Mammary epithelial cell (primary cell): ENCODE measurements at regions of chrX and their contacts with region 1.

Region 1: GRCh38 chrX:132631579-132632232 is 142.9 kb upstream of the MBNL3 start:
- DNase-seq: peak; percentile 14
- H3K4me3 ChIP-seq: no peak overlapping the region
- H3K27ac ChIP-seq: no peak overlapping the region
- H3K4me1 ChIP-seq: no peaks in the 10 kb centered on the region
- H3K27me3 ChIP-seq: no peaks in the 10 kb centered on the region
- CTCF ChIP-seq: peak; percentile 57 to 69

Region 2: DNA sequence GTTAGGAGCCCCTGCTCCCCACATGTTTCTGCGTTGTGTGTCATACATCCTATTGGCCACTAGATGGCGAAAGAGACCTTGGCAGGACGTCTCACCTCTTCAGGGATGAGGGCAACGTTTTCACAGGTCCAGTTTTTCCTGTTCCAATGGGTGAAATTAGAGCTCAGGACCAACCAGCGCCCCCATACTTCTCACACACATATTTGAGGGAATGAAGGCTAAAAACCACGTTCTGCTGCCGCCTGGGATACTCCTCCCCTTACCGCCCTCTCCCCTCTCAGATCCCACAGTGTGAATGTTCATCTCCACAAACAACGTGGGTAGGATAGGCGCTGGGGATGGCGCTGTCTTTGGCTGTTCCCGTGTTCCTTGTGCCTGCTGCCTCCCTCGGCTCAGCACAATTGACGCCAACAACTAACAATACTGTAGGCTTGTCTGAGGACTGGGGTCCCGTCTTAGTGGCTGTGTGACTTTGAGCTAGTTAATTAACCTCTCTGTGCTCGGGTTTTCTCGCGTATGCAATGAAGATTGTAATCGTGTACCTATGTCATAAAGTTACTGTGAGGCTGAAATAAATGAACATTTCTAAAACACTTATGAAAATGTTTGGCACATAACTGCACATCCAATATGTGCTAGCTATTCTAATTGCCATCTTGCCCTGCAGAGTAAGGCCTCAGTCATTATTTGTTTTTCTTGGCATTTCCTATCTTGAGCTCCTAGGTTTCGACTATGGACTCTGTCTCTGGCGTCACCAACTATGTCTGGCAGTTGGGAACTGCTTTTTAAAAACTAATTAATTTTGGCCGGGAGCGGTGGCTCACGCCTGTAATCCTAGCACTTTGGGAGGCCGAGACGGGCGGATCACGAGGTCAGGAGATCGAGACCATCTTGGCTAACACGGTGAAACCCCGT is 790.0 kb before region 1 on chrX:
- CTCF ChIA-PET with region 1: no interaction called
- dilution Hi-C with region 1: no loop called
- in situ Hi-C with region 1: loop called in 1 of 2 experiments (anchors 25 kb)
- intact Hi-C with region 1: loop called (anchors 1 kb)
- DNase-seq: peak; percentile 54
- H3K4me3 ChIP-seq: no peak overlapping the region
- H3K27ac ChIP-seq: no peak overlapping the region
- H3K4me1 ChIP-seq: no peaks in the 10 kb centered on the region
- H3K27me3 ChIP-seq: no peaks in the 10 kb centered on the region
- CTCF ChIP-seq: peak; percentile 87 to 92

Region 3: GRCh38 chrX:132226169-132226568 is 405.5 kb before region 1 on chrX:
- CTCF ChIA-PET with region 1: no interaction called
- dilution Hi-C with region 1: no loop called
- in situ Hi-C with region 1: no loop called
- intact Hi-C with region 1: loop called (anchors 1 kb)
- DNase-seq: no peak
- H3K4me3 ChIP-seq: no peak overlapping the region
- H3K27ac ChIP-seq: no peak overlapping the region
- H3K4me1 ChIP-seq: no peaks in the 10 kb centered on the region
- H3K27me3 ChIP-seq: no peaks in the 10 kb centered on the region
- CTCF ChIP-seq: peak; percentile 25 to 48

Region 4: DNA sequence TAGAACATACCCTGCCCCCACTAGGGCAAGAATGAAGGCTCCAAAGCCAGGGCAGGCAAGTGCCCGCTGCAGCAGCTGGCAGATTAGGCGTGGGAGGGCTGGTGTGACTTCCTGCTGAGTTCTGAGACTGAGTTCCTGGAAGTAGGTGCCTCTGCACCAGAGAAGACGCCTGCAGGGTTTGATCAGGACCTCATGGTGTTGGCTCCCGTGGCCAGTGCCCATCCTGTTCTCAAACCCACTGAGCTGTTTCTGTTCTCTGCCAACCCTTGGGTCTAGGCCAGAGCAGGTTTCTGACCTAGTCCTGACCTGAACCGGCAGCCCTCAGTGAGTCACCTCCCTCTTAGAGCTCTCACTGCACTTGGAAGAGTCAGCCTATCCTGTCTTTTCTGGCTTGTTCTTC is 106.0 kb after region 1 on chrX:
- CTCF ChIA-PET with region 1: no interaction called
- dilution Hi-C with region 1: no loop called
- in situ Hi-C with region 1: no loop called
- intact Hi-C with region 1: no loop called
- DNase-seq: peak; percentile 38
- H3K4me3 ChIP-seq: no peak overlapping the region
- H3K27ac ChIP-seq: no peak overlapping the region
- H3K4me1 ChIP-seq: peaks cover 3% of the 10 kb centered on the region
- H3K27me3 ChIP-seq: no peaks in the 10 kb centered on the region
- CTCF ChIP-seq: no peak

Region 5: GRCh38 chrX:133171962-133172708 is 540.4 kb after region 1 on chrX:
- CTCF ChIA-PET with region 1: no interaction called
- dilution Hi-C with region 1: no loop called
- in situ Hi-C with region 1: no loop called
- intact Hi-C with region 1: loop called (anchors 5 kb)
- DNase-seq: peak; percentile 20
- H3K4me3 ChIP-seq: no peak overlapping the region
- H3K27ac ChIP-seq: no peak overlapping the region
- H3K4me1 ChIP-seq: no peaks in the 10 kb centered on the region
- H3K27me3 ChIP-seq: no peaks in the 10 kb centered on the region
- CTCF ChIP-seq: peak; percentile 63 to 64